GM12878 (cell line): ENCODE measurements at regions of chr4 and their contacts with region 1.

Region 1: GRCh38 chr4:54058171-54058570 is 6.2 kb downstream of the CHIC2 start:
- DNase-seq: no peak
- ATAC-seq: peak; percentile 62
- H3K4me3 ChIP-seq: peak overlapping the region; percentile 2; the same call in 1 of the 2 replicates
- H3K27ac ChIP-seq: no peak overlapping the region; the same call in 1 of the 2 replicates
- H3K4me1 ChIP-seq: peaks cover 9% of the 10 kb centered on the region; the same call in 1 of the 2 replicates
- H3K27me3 ChIP-seq: no peaks in the 10 kb centered on the region
- CTCF ChIP-seq: no peak
- EP300 ChIP-seq: no peak
- POLR2A ChIP-seq: no peak
- RAD21 ChIP-seq: no peak

Region 2: DNA sequence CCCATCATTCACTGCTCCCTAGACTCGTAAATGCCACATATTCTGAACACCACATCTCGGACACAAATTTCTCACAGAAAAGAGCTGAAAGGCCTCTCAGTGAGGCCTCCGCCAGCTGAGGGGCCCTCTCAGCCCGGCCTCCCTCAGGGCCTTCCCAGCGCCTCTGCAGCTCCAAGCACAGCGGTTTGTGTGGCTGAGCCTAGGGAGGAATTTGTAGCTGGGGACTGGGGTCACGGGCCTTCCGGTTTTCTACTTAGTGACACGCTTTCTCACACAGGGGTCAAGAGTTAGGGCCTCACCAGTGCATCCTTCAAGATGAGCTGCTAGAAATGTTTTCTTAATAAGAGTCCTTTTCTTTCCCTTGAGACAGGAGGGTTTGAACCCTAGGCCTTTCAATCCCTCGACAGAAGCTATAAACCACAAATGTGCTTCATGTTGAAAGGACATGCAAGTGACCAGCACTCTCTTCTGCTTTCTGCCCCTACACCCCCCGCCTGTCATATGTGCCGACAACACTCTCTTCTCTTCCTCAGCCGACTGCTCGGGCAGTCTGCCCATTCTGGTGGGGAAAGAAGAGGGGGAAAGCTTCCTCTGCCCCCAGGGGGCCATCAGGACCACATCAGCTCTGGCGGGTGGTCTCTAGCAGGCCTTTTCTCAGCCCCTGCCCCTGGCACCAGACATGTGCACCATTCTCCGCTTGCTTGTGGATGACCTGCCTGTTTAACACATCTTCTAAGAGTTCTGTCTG is 98.6 kb before region 1 on chr4:
- CTCF ChIA-PET with region 1: no interaction called
- POLR2A ChIA-PET with region 1: no interaction called
- RAD21 ChIA-PET with region 1: no interaction called
- SMC1A ChIA-PET with region 1: no interaction called
- in situ Hi-C with region 1: no loop called
- intact Hi-C with region 1: no loop called
- DNase-seq: no peak
- ATAC-seq: no peak
- H3K4me3 ChIP-seq: no peak overlapping the region
- H3K27ac ChIP-seq: no peak overlapping the region
- H3K4me1 ChIP-seq: no peaks in the 10 kb centered on the region
- H3K27me3 ChIP-seq: no peaks in the 10 kb centered on the region; a peak in 2 of 4 replicates
- CTCF ChIP-seq: no peak
- EP300 ChIP-seq: no peak
- POLR2A ChIP-seq: no peak
- RAD21 ChIP-seq: no peak

Region 3: GRCh38 chr4:53974561-53974960 is 83.6 kb before region 1 on chr4:
- CTCF ChIA-PET with region 1: no interaction called
- POLR2A ChIA-PET with region 1: no interaction called
- RAD21 ChIA-PET with region 1: no interaction called
- SMC1A ChIA-PET with region 1: no interaction called
- in situ Hi-C with region 1: no loop called
- intact Hi-C with region 1: no loop called
- DNase-seq: no peak
- ATAC-seq: no peak
- H3K4me3 ChIP-seq: no peak overlapping the region
- H3K27ac ChIP-seq: no peak overlapping the region
- H3K4me1 ChIP-seq: no peaks in the 10 kb centered on the region
- H3K27me3 ChIP-seq: no peaks in the 10 kb centered on the region
- CTCF ChIP-seq: no peak
- EP300 ChIP-seq: no peak
- POLR2A ChIP-seq: no peak
- RAD21 ChIP-seq: no peak

Region 4: GRCh38 chr4:54014666-54015160 is 43.5 kb before region 1 on chr4:
- CTCF ChIA-PET with region 1: interaction called, 11 read pairs
- POLR2A ChIA-PET with region 1: interaction called, 7 read pairs
- RAD21 ChIA-PET with region 1: interaction called, 5 read pairs
- SMC1A ChIA-PET with region 1: interaction called, 4 read pairs
- in situ Hi-C with region 1: no loop called
- intact Hi-C with region 1: no loop called
- DNase-seq: no peak
- ATAC-seq: no peak
- H3K4me3 ChIP-seq: no peak overlapping the region
- H3K27ac ChIP-seq: no peak overlapping the region
- H3K4me1 ChIP-seq: no peaks in the 10 kb centered on the region
- H3K27me3 ChIP-seq: no peaks in the 10 kb centered on the region
- CTCF ChIP-seq: no peak
- EP300 ChIP-seq: no peak
- POLR2A ChIP-seq: no peak
- RAD21 ChIP-seq: no peak